T-cell (primary cell): ENCODE measurements at regions of chr13 and their contacts with region 1.

Region 1: GRCh38 chr13:109786457-109787134 is at the start of gene IRS2:
- DNase-seq: peak; percentile 77 to 96 (median 93)
- ATAC-seq: peak; percentile 82 to 88 (median 84)
- H3K4me3 ChIP-seq: peak within 1 kb of the TSS; percentile 58 to 68
- H3K4me3 Mint-ChIP-seq: peak within 1 kb of the TSS; percentile 72 to 81 (median 80)
- H3K27ac ChIP-seq: no peak within 1 kb of the TSS
- H3K27ac Mint-ChIP-seq: peak within 1 kb of the TSS; percentile 79 to 80
- H3K4me1 ChIP-seq: peaks cover 2 to 23% of the 10 kb centered on the region in 2 experiments
- H3K4me1 Mint-ChIP-seq: peaks cover 23 to 26% (median 24%) of the 10 kb centered on the region in 3 donors
- H3K27me3 ChIP-seq: peaks cover 0 to 9% of the 10 kb centered on the region in 2 experiments
- H3K27me3 Mint-ChIP-seq: peaks cover 3% of the 10 kb centered on the region in 2 donors
- total RNA-seq, gene IRS2: 22.1 to 95.7 (median 25.7) TPM

Region 2: GRCh38 chr13:108960461-108960860 is 826.1 kb before region 1 on chr13:
- CTCF ChIA-PET with region 1: no interaction called
- POLR2A ChIA-PET with region 1: interaction called in 1 of 2 experiments, 11 read pairs
- DNase-seq: no peak
- ATAC-seq: no peak
- H3K4me3 ChIP-seq: no peak overlapping the region
- H3K4me3 Mint-ChIP-seq: no peak overlapping the region
- H3K27ac ChIP-seq: no peak overlapping the region
- H3K27ac Mint-ChIP-seq: no peak overlapping the region
- H3K4me1 ChIP-seq: no peaks in the 10 kb centered on the region
- H3K4me1 Mint-ChIP-seq: no peaks in the 10 kb centered on the region
- H3K27me3 ChIP-seq: peaks cover 0 to 5% of the 10 kb centered on the region in 2 experiments
- H3K27me3 Mint-ChIP-seq: peaks cover 6 to 13% of the 10 kb centered on the region in 2 donors